ENCODE measurements at regions of chr3 and their contacts with region 1.

Region 1: GRCh38 chr3:193572426-193572908 is 17.8 kb upstream of the ATP13A4 start:
- DNase-seq: no peak
- ATAC-seq: peak; percentile 72

Region 2: GRCh38 chr3:192467230-192468140 is 1105.0 kb before region 1 on chr3:
- intact Hi-C with region 1: loop called (anchors 10 kb)
- DNase-seq: no peak
- ATAC-seq: peak; percentile 74

Region 3: GRCh38 chr3:192816351-192816750 is 756.1 kb before region 1 on chr3:
- intact Hi-C with region 1: loop called (anchors 2 kb)
- DNase-seq: no peak
- ATAC-seq: no peak

Region 4: DNA sequence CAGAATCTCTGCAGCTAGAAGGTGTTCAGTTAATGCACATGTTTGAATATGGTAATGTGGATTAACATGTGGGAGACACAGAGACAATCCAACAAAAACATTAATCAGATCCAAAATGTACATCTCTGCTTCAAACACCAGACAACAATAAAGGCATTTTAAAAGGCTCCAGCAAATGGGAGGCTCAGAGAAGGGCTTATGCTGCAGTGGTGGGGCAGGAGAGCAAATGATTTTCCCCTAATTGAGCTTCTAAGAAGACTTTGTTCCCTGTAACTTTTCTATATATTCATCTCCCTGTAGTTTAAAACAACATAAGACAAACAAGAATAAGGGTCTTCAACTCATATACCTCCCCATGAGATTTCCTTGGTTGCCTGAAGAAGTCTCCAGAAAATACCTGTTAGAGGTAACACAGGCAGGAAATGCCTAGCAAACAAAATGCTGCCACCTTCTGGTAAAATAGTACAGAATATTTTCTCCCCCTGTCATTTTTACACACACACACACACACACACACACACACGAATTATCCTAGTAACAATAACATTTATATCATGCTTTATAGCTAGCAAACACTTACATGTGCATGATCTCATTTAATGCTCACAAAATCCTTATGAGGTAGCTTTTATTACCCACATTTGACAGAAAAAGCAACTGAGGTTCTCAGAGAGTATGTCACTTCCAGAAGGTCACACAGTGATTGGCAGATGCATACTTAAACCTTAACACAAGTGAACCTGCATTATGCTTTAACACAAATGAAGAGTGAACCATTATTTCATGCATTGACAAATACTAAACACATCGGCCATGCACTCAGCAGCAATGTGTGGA is 531.4 kb before region 1 on chr3:
- intact Hi-C with region 1: loop called (anchors 2 kb)
- DNase-seq: no peak
- ATAC-seq: no peak

Region 5: DNA sequence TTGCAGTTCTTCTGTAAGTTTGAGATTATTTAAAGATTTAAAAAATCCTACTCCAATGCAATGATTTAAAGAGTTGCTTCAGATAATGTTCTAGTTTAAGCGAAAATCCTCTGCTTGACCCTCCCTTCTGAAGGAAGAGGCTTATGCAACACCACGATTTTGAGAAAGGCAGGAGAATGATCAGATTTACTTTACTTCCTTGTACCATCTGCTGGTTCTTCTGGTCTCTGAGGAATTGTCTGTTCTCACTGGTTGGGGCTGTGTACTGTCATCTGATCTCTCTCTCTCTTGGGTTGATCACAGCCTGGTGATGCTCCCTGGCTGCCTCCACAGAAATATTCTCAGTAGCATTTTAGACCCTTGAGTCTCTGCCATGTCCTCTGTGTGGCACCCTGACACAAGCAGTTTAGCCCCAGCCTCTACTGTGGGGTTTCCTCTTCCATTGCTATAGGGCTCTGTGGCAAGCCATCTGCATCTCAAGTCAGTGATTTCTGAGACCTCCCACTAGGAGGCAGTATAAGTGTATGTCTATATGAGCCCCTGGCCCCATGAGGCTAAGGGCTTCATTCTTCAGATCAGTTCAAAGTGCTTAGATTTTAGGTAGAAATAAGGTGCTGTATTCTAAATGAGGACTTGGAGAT is 382.2 kb before region 1 on chr3:
- intact Hi-C with region 1: loop called (anchors 5 kb)
- DNase-seq: no peak
- ATAC-seq: no peak

Region 6: GRCh38 chr3:193465992-193466608 is 106.4 kb before region 1 on chr3:
- intact Hi-C with region 1: loop called (anchors 2 kb)
- DNase-seq: no peak
- ATAC-seq: no peak

Region 7: GRCh38 chr3:193946945-193947344 is 374.5 kb after region 1 on chr3:
- intact Hi-C with region 1: no loop called
- DNase-seq: no peak
- ATAC-seq: no peak